GM12878 (cell line): ENCODE measurements at regions of chr9 and their contacts with region 1.

Region 1: DNA sequence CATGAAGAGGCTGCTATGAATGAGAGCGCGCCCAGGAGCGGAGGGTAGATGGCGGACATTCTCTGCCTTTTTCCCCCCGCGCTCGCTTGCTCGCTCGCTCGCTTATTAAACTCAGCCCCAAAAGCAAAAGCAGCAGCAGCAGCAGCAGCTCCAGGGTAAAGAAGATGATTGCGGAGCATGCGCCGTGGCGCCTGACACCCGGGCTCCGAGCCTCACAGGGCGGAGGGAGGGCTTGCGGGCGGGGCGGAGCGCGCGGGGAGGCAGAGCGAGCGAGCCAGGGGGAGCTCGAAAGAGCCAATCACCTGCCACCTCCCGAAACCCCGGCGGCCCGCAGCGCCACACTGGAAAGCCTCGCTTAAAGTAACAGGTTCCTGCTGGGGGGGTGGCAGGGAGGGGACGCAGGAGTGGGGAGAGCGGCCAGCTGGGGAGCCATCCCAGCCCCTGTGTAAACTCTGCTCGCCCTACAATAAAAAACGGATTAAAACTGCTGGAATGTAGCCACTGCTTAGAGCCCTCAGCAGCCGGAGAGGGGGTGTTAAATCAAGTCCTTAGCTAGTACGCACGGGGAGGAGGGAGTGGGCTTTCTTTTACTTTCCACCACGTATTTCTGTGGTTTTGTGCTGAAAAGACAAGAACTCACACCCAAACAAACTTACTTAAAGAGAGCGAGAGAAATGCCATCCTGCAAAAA is at the start of gene MLLT3:
- DNase-seq: peak; percentile 87
- ATAC-seq: peak; percentile 85
- H3K4me3 ChIP-seq: peak within 1 kb of the TSS; percentile 87
- H3K27ac ChIP-seq: peak within 1 kb of the TSS; percentile 80
- H3K4me1 ChIP-seq: no peaks in the 10 kb centered on the region
- H3K27me3 ChIP-seq: no peaks in the 10 kb centered on the region
- CTCF ChIP-seq: peak in 1 of 3 experiments; percentile 13; a peak in 1 of 6 replicates
- EP300 ChIP-seq: no peak
- POLR2A ChIP-seq: peak; percentile 68
- RAD21 ChIP-seq: peak; percentile 10; the same call in 1 of the 2 replicates
- polyA plus RNA-seq, gene MLLT3: 32.9 to 37.9 TPM

Region 2: DNA sequence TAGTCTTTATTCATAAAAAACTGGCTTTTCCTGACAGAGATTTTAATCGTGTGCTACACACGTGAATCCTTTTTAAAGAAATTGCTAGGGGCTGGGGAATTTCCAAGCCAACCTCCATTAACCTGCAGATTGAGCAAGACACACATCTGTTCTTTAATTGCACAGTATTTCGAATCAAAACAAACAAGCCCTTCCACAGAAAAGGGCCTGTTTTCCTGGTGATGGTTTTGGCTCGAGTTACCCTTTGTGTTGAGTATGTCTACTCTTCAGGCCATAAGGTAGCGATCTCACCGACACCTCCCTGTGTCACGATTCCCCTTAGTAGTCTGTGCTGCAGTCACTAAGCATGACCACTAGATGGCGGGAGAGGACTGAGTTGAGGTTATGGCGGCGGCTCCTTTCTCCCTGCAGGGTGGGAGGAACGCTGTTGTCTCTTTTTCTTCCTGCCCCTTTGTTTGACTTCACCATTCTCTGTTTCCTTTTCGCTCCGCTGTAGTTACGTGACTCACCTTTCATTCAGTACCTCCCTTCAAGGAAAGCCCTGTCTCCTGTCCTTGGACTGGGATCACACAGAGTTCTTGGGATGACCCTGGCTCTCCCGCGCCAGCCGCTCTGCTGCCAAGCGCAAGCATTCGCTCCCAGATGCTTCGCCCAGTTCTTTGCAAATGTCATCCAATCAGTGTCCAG is 696.5 kb before region 1 on chr9:
- CTCF ChIA-PET with region 1: interaction called, 5 read pairs
- POLR2A ChIA-PET with region 1: no interaction called
- RAD21 ChIA-PET with region 1: interaction called, 4 read pairs
- SMC1A ChIA-PET with region 1: interaction called, 5 read pairs
- in situ Hi-C with region 1: loop called (anchors 5 kb)
- intact Hi-C with region 1: loop called (anchors 2 kb)
- DNase-seq: peak; percentile 48
- ATAC-seq: peak; percentile 98
- H3K4me3 ChIP-seq: peak overlapping the region; percentile 56; the same call in 1 of the 2 replicates
- H3K27ac ChIP-seq: no peak overlapping the region
- H3K4me1 ChIP-seq: no peaks in the 10 kb centered on the region; the same call in 1 of the 2 replicates
- H3K27me3 ChIP-seq: no peaks in the 10 kb centered on the region; a peak in 2 of 4 replicates
- CTCF ChIP-seq: peak; percentile 94 to 97 (median 96)
- EP300 ChIP-seq: no peak
- POLR2A ChIP-seq: no peak
- RAD21 ChIP-seq: peak; percentile 98

Region 3: DNA sequence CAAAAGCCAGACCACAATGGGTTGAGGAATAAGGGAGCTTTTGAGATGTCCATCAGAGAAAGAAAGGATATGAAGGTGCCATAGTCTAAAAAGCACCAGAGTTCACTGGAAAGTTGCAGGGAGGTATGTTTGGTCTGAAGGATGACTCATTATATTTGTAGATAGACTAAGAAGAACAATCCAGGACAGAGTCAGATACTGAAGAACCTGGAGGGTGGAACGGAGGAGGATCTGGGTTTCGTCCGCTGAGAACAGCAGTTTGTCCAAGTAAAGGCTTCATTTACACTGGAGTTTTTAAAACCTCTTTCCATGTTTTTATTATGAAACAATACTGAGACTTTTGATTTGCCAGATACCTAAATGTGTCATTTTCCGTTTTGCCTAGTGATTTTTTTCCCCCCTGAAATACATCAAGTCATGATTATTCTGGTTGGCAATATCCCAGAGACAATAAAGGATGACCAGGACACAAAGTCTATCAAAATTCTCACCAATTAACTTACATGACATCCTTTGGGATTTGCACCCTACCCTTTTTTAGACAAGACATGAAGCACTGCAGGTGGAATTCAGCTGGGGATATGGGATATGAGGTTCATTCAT is 220.1 kb before region 1 on chr9:
- CTCF ChIA-PET with region 1: no interaction called
- POLR2A ChIA-PET with region 1: no interaction called
- RAD21 ChIA-PET with region 1: no interaction called
- SMC1A ChIA-PET with region 1: no interaction called
- in situ Hi-C with region 1: no loop called
- intact Hi-C with region 1: no loop called
- DNase-seq: no peak
- ATAC-seq: no peak
- H3K4me3 ChIP-seq: no peak overlapping the region
- H3K27ac ChIP-seq: no peak overlapping the region
- H3K4me1 ChIP-seq: peaks cover 4% of the 10 kb centered on the region; the same call in 1 of the 2 replicates
- H3K27me3 ChIP-seq: no peaks in the 10 kb centered on the region
- CTCF ChIP-seq: no peak
- EP300 ChIP-seq: no peak
- POLR2A ChIP-seq: no peak
- RAD21 ChIP-seq: no peak

Region 4: GRCh38 chr9:20526500-20527319 is 95.8 kb before region 1 on chr9:
- CTCF ChIA-PET with region 1: interaction called, 24 read pairs
- POLR2A ChIA-PET with region 1: interaction called, 3 read pairs
- RAD21 ChIA-PET with region 1: interaction called, 19 read pairs
- SMC1A ChIA-PET with region 1: interaction called, 27 read pairs
- in situ Hi-C with region 1: no loop called
- intact Hi-C with region 1: no loop called
- DNase-seq: peak; percentile 28
- ATAC-seq: peak; percentile 89
- H3K4me3 ChIP-seq: no peak overlapping the region
- H3K27ac ChIP-seq: no peak overlapping the region
- H3K4me1 ChIP-seq: peaks cover 30% of the 10 kb centered on the region; the same call in 1 of the 2 replicates
- H3K27me3 ChIP-seq: no peaks in the 10 kb centered on the region
- CTCF ChIP-seq: no peak; a peak in 1 of 6 replicates
- EP300 ChIP-seq: no peak
- POLR2A ChIP-seq: no peak
- RAD21 ChIP-seq: no peak

Region 5: GRCh38 chr9:20593551-20593950 is 28.9 kb before region 1 on chr9:
- CTCF ChIA-PET with region 1: interaction called, 6 read pairs
- POLR2A ChIA-PET with region 1: interaction called, 8 read pairs
- RAD21 ChIA-PET with region 1: interaction called, 18 read pairs
- SMC1A ChIA-PET with region 1: interaction called, 47 read pairs
- in situ Hi-C with region 1: no loop called
- intact Hi-C with region 1: no loop called
- DNase-seq: no peak
- ATAC-seq: no peak
- H3K4me3 ChIP-seq: no peak overlapping the region
- H3K27ac ChIP-seq: no peak overlapping the region
- H3K4me1 ChIP-seq: peaks cover 9% of the 10 kb centered on the region
- H3K27me3 ChIP-seq: no peaks in the 10 kb centered on the region
- CTCF ChIP-seq: no peak
- EP300 ChIP-seq: no peak
- POLR2A ChIP-seq: no peak
- RAD21 ChIP-seq: no peak

Region 6: GRCh38 chr9:20640331-20641187 is 18.1 kb after region 1 on chr9:
- CTCF ChIA-PET with region 1: interaction called, 114 read pairs
- POLR2A ChIA-PET with region 1: interaction called, 87 read pairs
- RAD21 ChIA-PET with region 1: interaction called, 194 read pairs
- SMC1A ChIA-PET with region 1: interaction called, 232 read pairs
- in situ Hi-C with region 1: no loop called
- intact Hi-C with region 1: loop called (anchors 1 kb)
- DNase-seq: peak; percentile 99
- ATAC-seq: peak; percentile 96
- H3K4me3 ChIP-seq: no peak overlapping the region
- H3K27ac ChIP-seq: peak overlapping the region; percentile 73
- H3K4me1 ChIP-seq: peaks cover 13% of the 10 kb centered on the region
- H3K27me3 ChIP-seq: no peaks in the 10 kb centered on the region
- CTCF ChIP-seq: no peak
- EP300 ChIP-seq: peak; percentile 67 to 90; a peak in 3 of 4 replicates
- POLR2A ChIP-seq: peak; percentile 46; the same call in 1 of the 2 replicates
- RAD21 ChIP-seq: peak; percentile 11; the same call in 1 of the 2 replicates

Region 7: DNA sequence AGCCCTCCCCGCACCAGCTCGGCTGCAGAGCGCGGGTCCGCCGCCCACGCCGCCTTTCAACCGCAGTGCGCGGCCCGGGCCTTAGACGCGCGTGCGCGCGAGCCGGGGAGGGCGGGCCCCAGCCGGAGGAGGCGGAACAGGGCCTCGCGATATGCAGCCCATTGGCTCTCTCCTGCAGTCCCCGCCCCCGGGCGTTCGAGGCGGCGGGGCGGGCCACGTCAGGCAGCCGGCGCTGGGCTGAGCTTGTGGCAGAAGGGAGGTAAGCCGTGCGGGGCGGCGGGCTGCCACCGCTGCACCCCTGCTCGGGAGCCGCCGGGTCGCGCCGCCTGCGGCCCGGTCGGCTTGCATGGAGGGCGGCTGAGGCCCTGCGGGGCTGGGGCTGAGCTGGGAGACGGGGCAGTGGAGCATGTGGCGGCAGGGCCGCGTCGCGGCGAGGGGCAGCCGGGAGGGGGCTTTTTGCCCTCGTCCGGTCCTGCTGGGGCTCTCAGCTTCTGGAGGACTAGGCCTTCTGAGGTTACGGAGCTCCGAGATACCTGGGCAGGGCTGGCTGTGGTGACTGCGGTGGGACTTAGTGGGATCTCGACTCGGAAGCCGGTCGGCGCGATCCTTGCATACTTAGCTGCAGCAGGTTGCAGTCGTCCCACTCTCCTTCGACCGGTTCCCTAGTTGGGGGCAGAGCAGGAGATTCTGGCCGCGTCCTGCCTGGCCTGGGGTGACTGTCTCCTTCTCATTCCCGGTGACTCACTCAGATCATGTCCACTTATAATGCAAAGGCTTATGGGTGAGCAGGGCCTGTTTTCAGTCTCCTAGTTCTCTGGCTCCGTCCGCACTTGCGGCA is 61.8 kb after region 1 on chr9 and contains the start of gene FOCAD:
- CTCF ChIA-PET with region 1: interaction called, 10 read pairs
- POLR2A ChIA-PET with region 1: interaction called, 7 read pairs
- RAD21 ChIA-PET with region 1: interaction called, 37 read pairs
- SMC1A ChIA-PET with region 1: interaction called, 31 read pairs
- in situ Hi-C with region 1: no loop called
- intact Hi-C with region 1: loop called (anchors 1 kb)
- DNase-seq: peak; percentile 72
- ATAC-seq: peak; percentile 99
- H3K4me3 ChIP-seq: peak within 1 kb of the TSS; percentile 78
- H3K27ac ChIP-seq: peak within 1 kb of the TSS; percentile 79
- H3K4me1 ChIP-seq: peaks cover 5% of the 10 kb centered on the region; the same call in 1 of the 2 replicates
- H3K27me3 ChIP-seq: no peaks in the 10 kb centered on the region
- CTCF ChIP-seq: no peak
- EP300 ChIP-seq: no peak
- POLR2A ChIP-seq: peak; percentile 98
- RAD21 ChIP-seq: 0 out of 2 replicates have a peak, but pooled peaks have one; percentile 2
- polyA plus RNA-seq, gene FOCAD: 13.7 to 17.5 TPM

Region 8: DNA sequence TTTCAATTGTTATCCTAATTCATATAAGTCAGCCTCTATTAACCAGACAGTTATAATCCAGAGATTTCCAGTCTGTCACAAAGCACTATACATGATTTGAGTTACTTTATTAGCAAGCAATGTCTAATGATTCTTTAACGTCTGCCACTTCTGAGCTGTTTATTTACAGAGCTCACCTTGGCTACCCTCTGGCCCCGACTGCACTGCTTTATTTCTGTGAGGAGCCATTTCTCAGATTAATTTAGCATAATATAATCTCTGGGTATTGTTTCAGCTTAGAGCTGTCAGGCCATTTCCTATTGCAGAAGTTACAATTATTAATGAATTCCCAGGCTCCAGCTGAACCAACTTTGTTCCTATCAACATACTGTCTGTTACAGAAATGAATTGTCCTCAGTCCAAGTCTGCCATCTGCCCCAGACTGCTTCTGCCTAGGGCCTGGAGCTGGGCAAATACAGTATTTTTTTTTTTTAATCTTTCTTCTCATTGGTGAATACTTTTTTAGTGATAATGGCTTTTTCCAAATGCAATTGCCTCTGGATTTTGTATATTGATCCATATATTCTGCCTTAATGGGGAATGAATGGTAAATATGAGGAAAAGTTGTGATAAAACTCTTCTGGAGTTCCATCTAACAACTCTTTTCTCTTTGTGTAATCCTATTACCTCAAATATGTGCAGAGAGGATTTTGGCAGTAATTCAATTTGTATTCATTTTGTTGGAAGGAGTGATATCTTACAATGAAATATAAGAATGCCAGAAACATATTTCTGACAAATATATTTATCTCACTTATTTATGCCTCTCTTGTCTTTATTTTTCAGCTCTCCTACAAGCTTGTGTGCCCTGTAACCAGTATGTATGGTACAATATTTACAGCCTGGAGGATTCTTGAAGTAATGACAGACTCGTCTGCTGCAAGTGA is 166.3 kb after region 1 on chr9:
- CTCF ChIA-PET with region 1: interaction called, 3 read pairs
- POLR2A ChIA-PET with region 1: no interaction called
- RAD21 ChIA-PET with region 1: interaction called, 3 read pairs
- SMC1A ChIA-PET with region 1: interaction called, 13 read pairs
- in situ Hi-C with region 1: no loop called
- intact Hi-C with region 1: loop called (anchors 5 kb)
- DNase-seq: no peak
- ATAC-seq: no peak
- H3K4me3 ChIP-seq: no peak overlapping the region
- H3K27ac ChIP-seq: no peak overlapping the region
- H3K4me1 ChIP-seq: no peaks in the 10 kb centered on the region
- H3K27me3 ChIP-seq: no peaks in the 10 kb centered on the region
- CTCF ChIP-seq: no peak
- EP300 ChIP-seq: no peak
- POLR2A ChIP-seq: no peak
- RAD21 ChIP-seq: no peak